Psoas muscle (tissue), 8 donors: ENCODE measurements at regions of chr9 and their contacts with region 1.

Region 1: GRCh38 chr9:113548221-113549041 is 84.9 kb downstream of the RGS3 start:
- DNase-seq: peak; percentile 78 to 84
- ATAC-seq: peak; percentile 94 to 98 (median 98)
- H3K4me3 ChIP-seq: peak overlapping the region; percentile 31
- H3K27ac ChIP-seq: peak overlapping the region; percentile 87
- H3K4me1 ChIP-seq: peaks cover 31% of the 10 kb centered on the region
- H3K27me3 ChIP-seq: no peaks in the 10 kb centered on the region
- CTCF ChIP-seq: no peak

Region 2: GRCh38 chr9:113492343-113493212 is 55.9 kb before region 1 on chr9:
- intact Hi-C with region 1: loop called in 1 of 2 experiments (anchors 5 kb)
- DNase-seq: peak in 1 of 2 donors; percentile 46
- ATAC-seq: peak; percentile 18 to 70 (median 52)
- H3K4me3 ChIP-seq: no peak overlapping the region
- H3K27ac ChIP-seq: peak overlapping the region; percentile 79
- H3K4me1 ChIP-seq: peaks cover 44% of the 10 kb centered on the region
- H3K27me3 ChIP-seq: no peaks in the 10 kb centered on the region
- CTCF ChIP-seq: no peak